Aorta (tissue), 5 donors: ENCODE measurements at regions of chr6 and their contacts with region 1.

Region 1: DNA sequence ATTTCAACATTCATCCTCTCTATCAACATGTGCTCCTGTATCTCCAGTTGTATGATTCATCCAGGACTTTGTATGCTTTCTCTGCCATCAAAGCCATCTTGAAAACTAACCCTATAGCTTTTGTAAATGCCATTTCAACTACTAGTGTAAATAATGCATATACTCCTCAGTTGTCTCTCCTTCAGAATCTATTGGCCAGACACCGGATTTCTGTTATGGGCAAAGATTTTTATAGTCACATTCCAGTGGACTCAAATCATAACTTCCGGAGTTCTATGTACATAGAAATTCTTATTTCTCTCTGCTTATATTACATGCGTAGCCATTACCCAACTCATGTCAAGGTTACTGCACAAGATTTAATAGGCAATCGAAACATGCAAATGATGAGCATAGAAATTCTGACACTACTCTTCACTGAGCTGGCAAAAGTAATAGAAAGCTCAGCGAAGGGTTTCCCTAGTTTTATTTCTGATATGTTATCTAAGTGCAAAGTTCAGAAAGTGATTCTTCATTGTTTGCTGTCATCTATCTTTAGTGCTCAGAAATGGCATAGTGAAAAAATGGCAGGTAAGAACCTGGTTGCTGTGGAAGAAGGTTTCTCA is 54.8 kb downstream of the PGM3 start:
- DNase-seq: no peak
- ATAC-seq: no peak
- H3K4me3 ChIP-seq: no peak overlapping the region
- H3K27ac ChIP-seq: no peak overlapping the region
- H3K4me1 ChIP-seq: no peaks in the 10 kb centered on the region
- H3K27me3 ChIP-seq: no peaks in the 10 kb centered on the region

Region 2: DNA sequence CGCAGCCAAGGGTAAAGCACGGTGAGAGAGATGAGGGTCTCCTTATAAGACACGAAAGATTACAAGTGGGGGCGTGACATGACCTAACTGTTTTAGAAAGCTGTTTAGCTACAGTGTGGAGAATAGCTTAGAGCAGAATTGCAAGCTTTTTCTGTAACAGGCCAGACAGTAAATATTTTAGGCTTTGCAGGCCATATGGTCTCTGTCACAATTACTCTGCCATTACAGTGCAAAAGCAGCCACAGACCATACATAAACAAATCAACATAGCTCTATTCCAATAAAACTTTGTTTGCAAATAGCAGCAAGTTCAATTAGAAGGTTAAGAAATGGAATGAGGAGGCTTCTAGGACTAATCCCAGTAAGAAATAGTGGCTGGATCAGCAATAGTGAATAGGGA is 38.0 kb after region 1 on chr6:
- intact Hi-C with region 1: loop called in 1 of 2 experiments (anchors 5 kb)
- DNase-seq: no peak
- ATAC-seq: no peak
- H3K4me3 ChIP-seq: no peak overlapping the region
- H3K27ac ChIP-seq: no peak overlapping the region
- H3K4me1 ChIP-seq: no peaks in the 10 kb centered on the region
- H3K27me3 ChIP-seq: no peaks in the 10 kb centered on the region

Region 3: GRCh38 chr6:84581494-84582259 is 1443.5 kb after region 1 on chr6:
- intact Hi-C with region 1: no loop called
- DNase-seq: no peak
- ATAC-seq: no peak
- H3K4me3 ChIP-seq: no peak overlapping the region
- H3K27ac ChIP-seq: no peak overlapping the region
- H3K4me1 ChIP-seq: peaks cover 0 to 2% of the 10 kb centered on the region in 2 donors
- H3K27me3 ChIP-seq: no peaks in the 10 kb centered on the region